ENCODE measurements at regions of chr5 and their contacts with region 1.

Region 1: GRCh38 chr5:56270568-56271392 is 37.6 kb upstream of the ANKRD55 start:
- H3K4me3 ChIP-seq: no peak overlapping the region
- H3K27ac ChIP-seq: no peak overlapping the region
- H3K4me1 ChIP-seq: no peaks in the 10 kb centered on the region
- CTCF ChIP-seq: peak; percentile 86

Region 2: GRCh38 chr5:55936100-55936693 is 334.6 kb before region 1 on chr5:
- CTCF ChIA-PET with region 1: interaction called, 32 read pairs
- POLR2A ChIA-PET with region 1: no interaction called
- H3K4me3 ChIP-seq: no peak overlapping the region
- H3K27ac ChIP-seq: no peak overlapping the region
- H3K4me1 ChIP-seq: no peaks in the 10 kb centered on the region
- CTCF ChIP-seq: peak; percentile 86

Region 3: GRCh38 chr5:56211298-56211865 is 59.4 kb before region 1 on chr5:
- CTCF ChIA-PET with region 1: no interaction called
- POLR2A ChIA-PET with region 1: no interaction called
- H3K4me3 ChIP-seq: no peak overlapping the region
- H3K27ac ChIP-seq: no peak overlapping the region
- H3K4me1 ChIP-seq: no peaks in the 10 kb centered on the region
- CTCF ChIP-seq: no peak

Region 4: GRCh38 chr5:56282216-56282615 is 11.4 kb after region 1 on chr5:
- CTCF ChIA-PET with region 1: interaction called, 15 read pairs
- POLR2A ChIA-PET with region 1: no interaction called
- H3K4me3 ChIP-seq: no peak overlapping the region
- H3K27ac ChIP-seq: no peak overlapping the region
- H3K4me1 ChIP-seq: no peaks in the 10 kb centered on the region
- CTCF ChIP-seq: no peak

Region 5: GRCh38 chr5:56303515-56303914 is 32.7 kb after region 1 on chr5:
- CTCF ChIA-PET with region 1: interaction called, 10 read pairs
- POLR2A ChIA-PET with region 1: no interaction called
- H3K4me3 ChIP-seq: no peak overlapping the region
- H3K27ac ChIP-seq: no peak overlapping the region
- H3K4me1 ChIP-seq: no peaks in the 10 kb centered on the region
- CTCF ChIP-seq: no peak

Region 6: DNA sequence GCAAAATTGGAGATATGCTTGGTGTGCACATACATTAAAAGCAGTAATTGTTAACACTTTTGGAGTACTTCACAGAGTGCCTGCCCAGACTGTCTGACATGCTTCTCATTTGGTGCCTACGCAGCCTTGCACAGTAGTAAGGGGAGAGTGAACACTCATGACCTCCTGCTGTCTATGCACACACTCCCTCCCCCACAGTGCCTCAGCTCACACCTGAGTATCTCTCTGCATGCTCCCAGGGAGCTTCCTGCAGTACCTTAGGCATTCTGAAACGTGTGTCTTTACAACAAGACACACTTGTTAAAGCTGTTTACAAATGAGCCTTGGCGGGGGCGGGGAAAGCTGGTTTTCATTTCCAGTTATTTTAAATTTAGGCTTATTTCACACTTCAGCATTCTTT is 562.5 kb after region 1 on chr5:
- CTCF ChIA-PET with region 1: interaction called, 74 read pairs
- POLR2A ChIA-PET with region 1: no interaction called
- H3K4me3 ChIP-seq: no peak overlapping the region
- H3K27ac ChIP-seq: no peak overlapping the region
- H3K4me1 ChIP-seq: peaks cover 54% of the 10 kb centered on the region
- CTCF ChIP-seq: no peak

Region 7: GRCh38 chr5:56838409-56839039 is 567.7 kb after region 1 on chr5:
- CTCF ChIA-PET with region 1: interaction called, 74 read pairs
- POLR2A ChIA-PET with region 1: interaction called, 3 read pairs
- H3K4me3 ChIP-seq: no peak overlapping the region
- H3K27ac ChIP-seq: no peak overlapping the region
- H3K4me1 ChIP-seq: peaks cover 11% of the 10 kb centered on the region
- CTCF ChIP-seq: peak; percentile 57

Region 8: DNA sequence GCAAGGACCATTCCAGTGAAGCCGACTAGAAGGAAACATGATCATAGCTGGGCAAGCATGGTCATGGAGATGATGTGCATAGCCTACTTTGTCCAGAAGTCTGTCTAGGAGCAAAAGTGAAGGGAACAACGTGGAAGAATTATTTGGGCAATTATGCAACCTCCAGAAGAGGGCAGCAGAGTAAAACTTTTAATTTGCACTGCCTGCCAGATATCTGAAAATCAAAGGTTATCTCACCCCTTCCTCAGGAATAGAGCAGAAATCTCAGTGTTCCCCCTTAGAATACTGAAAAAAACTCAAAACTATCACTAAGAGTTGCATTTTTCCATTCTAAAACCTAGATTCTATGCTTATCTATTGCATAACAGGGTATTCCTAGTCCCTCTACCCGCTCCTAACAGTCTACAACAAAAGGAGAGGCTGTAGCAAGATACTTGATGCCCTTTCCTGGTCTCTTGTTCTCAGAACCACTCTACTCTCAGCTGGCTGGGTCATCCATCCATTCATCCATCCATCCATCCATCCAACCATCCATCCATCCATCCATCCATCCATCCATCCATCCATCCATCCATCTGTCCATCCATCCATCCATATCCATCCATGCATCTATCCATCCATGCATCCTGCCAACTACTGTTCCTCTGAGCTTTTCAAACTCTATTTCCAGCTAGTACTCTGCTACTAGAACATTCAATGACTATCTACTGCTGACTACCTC is 630.2 kb after region 1 on chr5:
- CTCF ChIA-PET with region 1: interaction called, 16 read pairs
- POLR2A ChIA-PET with region 1: no interaction called
- H3K4me3 ChIP-seq: no peak overlapping the region
- H3K27ac ChIP-seq: no peak overlapping the region
- H3K4me1 ChIP-seq: no peaks in the 10 kb centered on the region
- CTCF ChIP-seq: 0 out of 2 replicates have a peak, but pooled peaks have one; percentile 50

Measured in HEK293 (cell line).